Activated CD4-positive, alpha-beta memory T cell treated with anti-CD3 and anti-CD28 coated beads for 36 hours (primary cell): ENCODE measurements at regions of chr2 and their contacts with region 1.

Region 1: GRCh38 chr2:207473049-207473930 is 56.5 kb upstream of the CREB1 start:
- DNase-seq: peak; percentile 71
- H3K4me3 Mint-ChIP-seq: no peak overlapping the region
- H3K27ac Mint-ChIP-seq: peak overlapping the region; percentile 32
- H3K4me1 Mint-ChIP-seq: peaks cover 22% of the 10 kb centered on the region
- H3K27me3 Mint-ChIP-seq: no peaks in the 10 kb centered on the region

Region 2: GRCh38 chr2:206556357-206556949 is 916.8 kb before region 1 on chr2:
- CTCF ChIA-PET with region 1: interaction called, 3 read pairs
- POLR2A ChIA-PET with region 1: interaction called, 4 read pairs
- intact Hi-C with region 1: loop called (anchors 10 kb)
- DNase-seq: no peak
- H3K4me3 Mint-ChIP-seq: no peak overlapping the region
- H3K27ac Mint-ChIP-seq: no peak overlapping the region
- H3K4me1 Mint-ChIP-seq: peaks cover 22% of the 10 kb centered on the region
- H3K27me3 Mint-ChIP-seq: peaks cover 2% of the 10 kb centered on the region

Region 3: GRCh38 chr2:206800506-206801417 is 672.5 kb before region 1 on chr2:
- CTCF ChIA-PET with region 1: interaction called, 36 read pairs
- POLR2A ChIA-PET with region 1: interaction called, 6 read pairs
- intact Hi-C with region 1: loop called (anchors 1 kb)
- DNase-seq: peak; percentile 57
- H3K4me3 Mint-ChIP-seq: no peak overlapping the region
- H3K27ac Mint-ChIP-seq: no peak overlapping the region
- H3K4me1 Mint-ChIP-seq: peaks cover 13% of the 10 kb centered on the region
- H3K27me3 Mint-ChIP-seq: no peaks in the 10 kb centered on the region

Region 4: GRCh38 chr2:206989306-206989705 is 484.0 kb before region 1 on chr2:
- CTCF ChIA-PET with region 1: interaction called, 8 read pairs
- POLR2A ChIA-PET with region 1: no interaction called
- intact Hi-C with region 1: loop called (anchors 2 kb)
- DNase-seq: peak; percentile 18
- H3K4me3 Mint-ChIP-seq: no peak overlapping the region
- H3K27ac Mint-ChIP-seq: no peak overlapping the region
- H3K4me1 Mint-ChIP-seq: peaks cover 24% of the 10 kb centered on the region
- H3K27me3 Mint-ChIP-seq: no peaks in the 10 kb centered on the region

Region 5: GRCh38 chr2:207073801-207074678 is 399.2 kb before region 1 on chr2:
- CTCF ChIA-PET with region 1: interaction called, 10 read pairs
- POLR2A ChIA-PET with region 1: no interaction called
- intact Hi-C with region 1: no loop called
- DNase-seq: peak; percentile 69
- H3K4me3 Mint-ChIP-seq: peak overlapping the region; percentile 41
- H3K27ac Mint-ChIP-seq: peak overlapping the region; percentile 85
- H3K4me1 Mint-ChIP-seq: peaks cover 27% of the 10 kb centered on the region
- H3K27me3 Mint-ChIP-seq: peaks cover 2% of the 10 kb centered on the region

Region 6: DNA sequence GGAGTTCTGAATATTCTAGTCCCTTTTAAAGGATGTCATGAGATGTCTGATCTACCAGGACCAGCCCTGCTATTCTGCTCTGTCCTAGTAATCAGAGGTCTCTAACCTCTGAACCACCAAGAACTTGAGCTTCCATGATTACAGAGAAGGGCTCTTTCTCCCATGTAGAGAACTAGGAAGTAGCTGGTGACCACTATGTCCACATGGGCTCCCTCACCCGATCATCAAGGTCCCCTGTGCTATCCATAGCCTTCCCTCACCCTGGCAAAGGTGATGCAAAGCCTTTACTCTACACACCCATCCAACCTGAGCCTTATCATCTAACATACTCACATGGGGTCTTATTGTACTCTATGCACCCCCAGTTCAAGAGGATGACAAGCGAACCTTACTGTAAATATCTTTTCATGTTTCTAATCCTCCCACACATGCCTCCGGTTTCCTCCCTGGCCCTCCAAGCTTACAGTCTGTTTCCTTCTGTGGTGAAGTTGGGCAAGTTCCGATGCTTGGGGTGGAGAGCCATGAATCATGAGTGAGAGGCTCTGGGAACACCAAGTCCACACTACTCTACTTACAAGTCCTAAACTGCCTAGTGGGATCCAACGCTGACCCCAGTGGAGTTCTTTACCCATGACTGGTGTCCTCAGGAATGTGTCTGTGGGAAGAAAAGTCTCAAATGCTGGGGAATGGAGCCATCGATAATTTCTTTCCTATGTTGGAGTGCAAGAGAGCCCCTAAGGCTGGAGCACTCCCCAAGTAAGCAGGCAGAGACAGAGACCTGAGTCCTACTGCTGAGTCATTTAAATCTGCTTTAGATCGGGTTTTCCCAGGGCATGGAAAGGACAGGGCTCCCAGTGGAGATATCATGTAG is 234.2 kb before region 1 on chr2:
- CTCF ChIA-PET with region 1: interaction called, 4 read pairs
- POLR2A ChIA-PET with region 1: no interaction called
- intact Hi-C with region 1: loop called (anchors 5 kb)
- DNase-seq: peak; percentile 69
- H3K4me3 Mint-ChIP-seq: no peak overlapping the region
- H3K27ac Mint-ChIP-seq: no peak overlapping the region
- H3K4me1 Mint-ChIP-seq: peaks cover 25% of the 10 kb centered on the region
- H3K27me3 Mint-ChIP-seq: peaks cover 1% of the 10 kb centered on the region